ENCODE measurements at regions of chr6 and their contacts with region 1.

Region 1: DNA sequence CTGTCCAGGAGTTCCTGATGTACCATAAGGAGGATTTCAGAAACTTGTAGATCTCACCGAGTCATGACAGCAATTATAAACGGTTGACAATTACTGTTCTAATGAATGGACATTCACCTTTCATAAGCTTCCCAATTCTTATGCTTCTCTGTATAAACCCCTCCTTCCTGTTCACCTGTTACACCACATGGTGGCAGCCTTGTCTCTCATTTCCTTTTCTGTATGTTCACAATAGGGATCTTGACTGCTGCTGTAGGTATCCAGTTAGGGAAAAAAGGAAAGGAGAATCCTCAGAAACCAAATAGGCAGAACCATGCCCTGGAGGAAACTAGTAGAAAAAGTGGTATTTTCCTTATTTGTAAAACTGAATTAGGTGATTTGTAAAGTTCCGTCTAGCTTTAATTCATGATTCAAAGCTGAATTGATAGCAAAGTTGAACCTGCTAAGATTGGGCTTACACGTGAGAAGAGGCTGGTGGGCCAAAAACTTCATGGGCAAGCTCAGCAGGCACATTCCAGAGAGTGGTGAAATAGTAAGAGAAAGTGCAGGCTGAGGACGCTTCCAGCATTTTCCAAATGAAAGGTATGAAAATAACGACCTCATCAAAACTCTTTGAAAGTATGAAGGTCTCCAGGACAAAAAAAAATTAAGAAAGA is 29.0 kb upstream of the TBPL1 start:
- DNase-seq: peak; percentile 74 to 92
- H3K4me3 ChIP-seq: no peak overlapping the region
- H3K27ac ChIP-seq: no peak overlapping the region
- H3K4me1 ChIP-seq: peaks cover 0 to 6% (median 0%) of the 10 kb centered on the region in 4 donors
- H3K27me3 ChIP-seq: peaks cover 0 to 18% (median 0%) of the 10 kb centered on the region in 3 donors
- CTCF ChIP-seq: peak in 5 of 7 experiments; percentile 78 to 94 (median 83)
- EP300 ChIP-seq: no peak
- POLR2A ChIP-seq: no peak

Region 2: DNA sequence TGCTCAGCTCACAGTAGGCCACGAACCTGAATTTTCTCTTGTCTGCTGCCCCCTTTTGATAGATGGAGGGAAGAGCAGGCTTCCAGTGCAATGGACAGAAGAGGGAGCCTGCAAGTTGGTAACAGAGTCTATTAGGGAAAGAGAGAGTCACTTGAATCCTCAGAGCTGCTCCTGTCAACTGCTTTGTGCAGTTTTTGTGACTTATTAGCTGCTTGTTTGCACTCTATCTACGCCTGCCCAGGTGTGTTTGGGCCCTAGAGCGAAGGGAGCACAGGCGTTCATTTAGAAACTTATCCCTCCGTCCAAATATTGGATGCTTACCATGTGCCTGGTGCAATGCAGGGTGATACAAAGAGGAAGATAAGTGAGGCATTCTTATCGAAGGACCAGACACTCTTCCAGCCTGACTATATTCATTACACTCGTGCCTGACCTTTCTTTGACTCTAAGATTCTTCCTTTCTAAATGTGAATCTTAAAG is 139.9 kb after region 1 on chr6:
- intact Hi-C with region 1: loop called (anchors 10 kb)
- DNase-seq: peak; percentile 63 to 88
- H3K4me3 ChIP-seq: no peak overlapping the region
- H3K27ac ChIP-seq: peak overlapping the region in 1 of 5 donors; percentile 48
- H3K4me1 ChIP-seq: peaks cover 0 to 36% (median 17%) of the 10 kb centered on the region in 4 donors
- H3K27me3 ChIP-seq: no peaks in the 10 kb centered on the region
- CTCF ChIP-seq: peak in 5 of 7 experiments; percentile 70 to 93 (median 84)
- EP300 ChIP-seq: no peak
- POLR2A ChIP-seq: no peak

Region 3: GRCh38 chr6:134093007-134093591 is 169.0 kb after region 1 on chr6:
- intact Hi-C with region 1: loop called (anchors 5 kb)
- DNase-seq: no peak
- H3K4me3 ChIP-seq: no peak overlapping the region
- H3K27ac ChIP-seq: no peak overlapping the region
- H3K4me1 ChIP-seq: peaks cover 0 to 8% (median 0%) of the 10 kb centered on the region in 4 donors
- H3K27me3 ChIP-seq: no peaks in the 10 kb centered on the region
- CTCF ChIP-seq: no peak
- EP300 ChIP-seq: no peak
- POLR2A ChIP-seq: no peak

Measured in stomach (tissue), 19 donors.